Activated naive CD4-positive, alpha-beta T cell treated with anti-CD3 and anti-CD28 coated beads, Interleukin-2, amount 10 ng/mL, durations not matched to agents 7 days and 5 days (primary cell): ENCODE measurements at regions of chr11 and their contacts with region 1.

Region 1: GRCh38 chr11:12224537-12224893 is 114.1 kb downstream of the MICAL2 start:
- DNase-seq: peak; percentile 94
- H3K4me3 Mint-ChIP-seq: peak overlapping the region; percentile 37
- H3K27ac Mint-ChIP-seq: peak overlapping the region; percentile 86
- H3K4me1 Mint-ChIP-seq: peaks cover 48% of the 10 kb centered on the region
- H3K27me3 Mint-ChIP-seq: no peaks in the 10 kb centered on the region

Region 2: GRCh38 chr11:12207384-12208150 is 16.9 kb before region 1 on chr11:
- CTCF ChIA-PET with region 1: interaction called, 14 read pairs
- DNase-seq: no peak
- H3K4me3 Mint-ChIP-seq: no peak overlapping the region
- H3K27ac Mint-ChIP-seq: no peak overlapping the region
- H3K4me1 Mint-ChIP-seq: peaks cover 3% of the 10 kb centered on the region
- H3K27me3 Mint-ChIP-seq: no peaks in the 10 kb centered on the region

Region 3: GRCh38 chr11:12417728-12418611 is 193.5 kb after region 1 on chr11:
- CTCF ChIA-PET with region 1: no interaction called
- DNase-seq: no peak
- H3K4me3 Mint-ChIP-seq: no peak overlapping the region
- H3K27ac Mint-ChIP-seq: no peak overlapping the region
- H3K4me1 Mint-ChIP-seq: peaks cover 2% of the 10 kb centered on the region
- H3K27me3 Mint-ChIP-seq: peaks cover 16% of the 10 kb centered on the region